ENCODE measurements at regions of chr1 and their contacts with region 1.

Region 1: GRCh38 chr1:196143602-196144342 is 464.5 kb downstream of the KCNT2 start:
- DNase-seq: no peak
- ATAC-seq: no peak
- H3K4me3 ChIP-seq: no peak overlapping the region
- H3K27ac ChIP-seq: no peak overlapping the region
- H3K4me1 ChIP-seq: no peaks in the 10 kb centered on the region
- H3K27me3 ChIP-seq: no peaks in the 10 kb centered on the region
- CTCF ChIP-seq: no peak
- POLR2A ChIP-seq: no peak

Region 2: GRCh38 chr1:196660852-196661251 is 517.1 kb after region 1 on chr1:
- intact Hi-C with region 1: loop called (anchors 5 kb)
- DNase-seq: peak in 3 of 4 donors; percentile 11 to 31 (median 15)
- ATAC-seq: peak; percentile 74
- H3K4me3 ChIP-seq: no peak overlapping the region
- H3K27ac ChIP-seq: no peak overlapping the region
- H3K4me1 ChIP-seq: no peaks in the 10 kb centered on the region
- H3K27me3 ChIP-seq: no peaks in the 10 kb centered on the region
- CTCF ChIP-seq: peak in 6 of 7 experiments; percentile 47 to 72 (median 70)
- POLR2A ChIP-seq: no peak